AG04450 (cell line): ENCODE measurements at regions of chr4 and their contacts with region 1.

Region 1: DNA sequence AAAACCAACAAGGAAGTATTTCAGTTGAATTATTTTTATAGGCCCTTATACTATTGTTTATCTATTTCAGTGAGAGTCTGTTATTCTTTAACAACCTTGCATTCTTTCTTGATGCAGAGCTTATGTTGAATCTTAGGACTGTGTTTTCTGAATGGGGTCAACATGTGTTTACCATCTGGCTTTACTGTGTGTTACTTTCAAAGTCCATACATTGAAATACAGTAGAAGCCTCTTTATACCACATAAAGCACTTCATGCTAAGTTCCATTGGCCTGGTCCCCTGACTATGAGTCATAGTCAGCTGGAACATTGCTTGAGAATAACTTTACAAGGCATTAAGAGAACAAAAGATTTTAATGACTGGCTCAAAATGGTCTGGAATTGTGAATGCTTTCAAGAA is 152.6 kb downstream of the GASK1B start:
- DNase-seq: peak; percentile 86
- H3K4me3 ChIP-seq: no peak overlapping the region
- H3K27ac ChIP-seq: peak overlapping the region; percentile 11
- H3K27me3 ChIP-seq: no peaks in the 10 kb centered on the region
- CTCF ChIP-seq: no peak

Region 2: DNA sequence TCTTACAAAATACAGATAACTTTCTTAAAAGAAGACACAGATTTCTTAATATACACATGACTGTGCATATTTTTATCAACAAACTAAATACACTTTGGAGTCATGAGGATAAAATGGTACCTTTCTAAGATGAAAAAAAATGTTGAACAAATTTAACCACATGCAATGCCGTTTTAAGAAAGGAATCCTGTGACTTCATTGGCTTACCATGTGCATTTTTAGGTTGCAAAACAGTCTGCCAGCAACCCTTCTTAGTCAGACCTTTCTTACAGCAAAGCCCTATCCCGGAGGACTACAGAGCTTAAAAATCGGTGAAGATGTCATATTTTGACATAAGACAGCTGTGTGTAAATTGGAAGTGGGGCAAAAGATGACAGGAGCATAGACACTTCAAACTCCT is 101.0 kb after region 1 on chr4:
- CTCF ChIA-PET with region 1: no interaction called
- POLR2A ChIA-PET with region 1: interaction called, 16 read pairs
- DNase-seq: peak; percentile 98
- H3K4me3 ChIP-seq: no peak overlapping the region; the same call in 1 of the 2 replicates
- H3K27ac ChIP-seq: peak overlapping the region; percentile 93
- H3K27me3 ChIP-seq: no peaks in the 10 kb centered on the region
- CTCF ChIP-seq: no peak

Region 3: GRCh38 chr4:158428242-158428641 is 408.1 kb after region 1 on chr4:
- CTCF ChIA-PET with region 1: no interaction called
- POLR2A ChIA-PET with region 1: no interaction called
- DNase-seq: no peak
- H3K4me3 ChIP-seq: no peak overlapping the region
- H3K27ac ChIP-seq: no peak overlapping the region
- H3K27me3 ChIP-seq: no peaks in the 10 kb centered on the region
- CTCF ChIP-seq: no peak